GM12878 (cell line): ENCODE measurements at regions of chr4 and their contacts with region 1.

Region 1: DNA sequence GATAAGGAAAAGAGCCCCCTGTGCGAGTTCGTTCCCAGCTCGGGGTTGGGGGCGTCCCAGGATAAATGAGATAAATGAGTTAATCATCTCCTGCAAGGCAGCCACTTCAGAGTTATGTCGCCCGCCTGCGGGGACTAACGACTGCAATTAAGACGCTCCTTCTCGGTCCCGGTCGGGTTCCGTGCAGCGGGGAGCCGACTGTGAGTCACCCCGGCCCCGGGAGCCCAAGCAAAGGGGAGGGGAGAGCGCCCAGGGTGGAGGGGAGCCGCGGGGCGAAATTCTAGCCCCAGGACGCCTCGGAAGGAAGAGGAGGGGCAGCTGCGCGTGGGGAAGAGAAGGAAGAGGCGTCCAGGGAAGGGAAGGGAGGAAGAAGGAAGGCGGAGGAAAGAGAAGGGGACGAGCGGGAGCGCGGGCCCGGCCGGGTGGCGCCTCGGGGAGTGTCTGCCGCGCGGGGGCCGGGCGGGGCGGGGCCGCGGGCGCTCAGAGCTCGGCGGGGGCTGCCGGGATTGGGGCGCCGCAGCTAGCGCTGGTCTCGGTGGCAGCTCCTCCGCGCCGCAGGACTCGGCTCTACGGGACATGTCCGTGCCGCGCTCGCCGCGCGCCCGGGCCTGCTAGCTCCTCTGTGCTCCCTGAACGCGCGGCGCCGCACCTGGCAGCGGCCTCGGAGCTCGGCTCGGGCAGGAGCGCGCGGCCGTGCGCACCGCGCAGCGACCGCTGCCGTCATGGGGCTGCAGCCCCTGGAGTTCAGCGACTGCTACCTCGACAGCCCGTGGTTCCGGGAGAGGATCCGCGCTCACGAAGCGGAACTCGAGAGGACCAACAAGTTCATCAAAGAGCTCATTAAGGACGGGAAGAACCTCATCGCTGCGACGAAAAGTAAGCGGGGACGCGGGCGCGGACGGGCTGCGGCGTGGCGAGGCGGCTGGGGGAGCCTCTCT is at the start of gene ARHGAP10:
- DNase-seq: no peak
- ATAC-seq: peak; percentile 71
- H3K4me3 ChIP-seq: peak within 1 kb of the TSS; percentile 98
- H3K27ac ChIP-seq: peak within 1 kb of the TSS; percentile 91
- H3K4me1 ChIP-seq: peaks cover 12% of the 10 kb centered on the region
- H3K27me3 ChIP-seq: no peaks in the 10 kb centered on the region
- CTCF ChIP-seq: no peak
- EP300 ChIP-seq: no peak
- POLR2A ChIP-seq: peak; percentile 78
- RAD21 ChIP-seq: no peak
- polyA plus RNA-seq, gene ARHGAP10: 1.3 to 4.5 TPM

Region 2: DNA sequence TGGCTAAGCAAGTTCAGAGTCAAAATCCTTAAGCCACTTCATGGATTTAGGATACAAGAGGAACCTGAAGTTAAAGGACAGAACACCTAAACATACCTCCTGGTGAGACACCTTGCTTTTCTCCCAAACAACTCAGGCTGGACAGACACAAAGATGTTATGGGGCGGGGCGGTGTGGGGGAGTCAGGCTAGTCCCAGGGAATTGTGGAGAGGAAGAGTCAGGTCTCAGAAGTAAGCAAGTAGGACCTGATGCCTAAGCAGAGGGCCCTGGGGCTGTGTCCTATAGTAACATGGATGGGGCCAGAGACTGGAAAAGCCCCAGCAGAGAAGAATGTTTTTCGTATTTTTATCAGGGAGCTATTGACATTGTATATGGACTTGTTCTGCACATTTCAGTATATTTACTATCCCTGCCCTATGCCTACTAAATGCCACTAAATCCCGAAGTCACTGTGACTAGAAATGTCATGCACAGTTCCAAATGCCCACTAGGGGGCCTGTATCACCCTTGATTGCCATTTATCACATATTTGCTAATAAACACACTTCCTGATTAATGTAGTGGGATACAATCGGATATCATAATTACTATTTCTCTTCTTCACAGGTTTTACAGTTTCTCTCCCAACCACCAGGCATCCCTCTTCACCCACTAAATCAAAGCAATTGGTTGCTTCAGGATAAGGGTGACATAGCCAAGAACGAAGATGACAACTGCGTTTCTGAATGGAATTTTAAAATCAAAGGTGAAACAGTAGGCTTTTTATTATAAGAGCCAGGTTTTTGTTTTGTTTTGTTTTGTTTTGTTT is 23.8 kb before region 1 on chr4:
- CTCF ChIA-PET with region 1: interaction called, 8 read pairs
- POLR2A ChIA-PET with region 1: interaction called, 6 read pairs
- RAD21 ChIA-PET with region 1: interaction called, 9 read pairs
- SMC1A ChIA-PET with region 1: interaction called, 19 read pairs
- in situ Hi-C with region 1: no loop called
- intact Hi-C with region 1: loop called (anchors 2 kb)
- DNase-seq: no peak
- ATAC-seq: peak; percentile 82
- H3K4me3 ChIP-seq: no peak overlapping the region
- H3K27ac ChIP-seq: no peak overlapping the region
- H3K4me1 ChIP-seq: peaks cover 3% of the 10 kb centered on the region
- H3K27me3 ChIP-seq: no peaks in the 10 kb centered on the region
- CTCF ChIP-seq: peak; percentile 76 to 92 (median 87)
- EP300 ChIP-seq: no peak
- POLR2A ChIP-seq: no peak
- RAD21 ChIP-seq: peak; percentile 95

Region 3: GRCh38 chr4:147749811-147750321 is 18.0 kb after region 1 on chr4:
- CTCF ChIA-PET with region 1: interaction called, 4 read pairs
- POLR2A ChIA-PET with region 1: interaction called, 6 read pairs
- RAD21 ChIA-PET with region 1: interaction called, 12 read pairs
- SMC1A ChIA-PET with region 1: interaction called, 7 read pairs
- in situ Hi-C with region 1: no loop called
- intact Hi-C with region 1: no loop called
- DNase-seq: peak; percentile 73
- ATAC-seq: peak; percentile 97
- H3K4me3 ChIP-seq: peak overlapping the region; percentile 39; the same call in 1 of the 2 replicates
- H3K27ac ChIP-seq: peak overlapping the region; percentile 52
- H3K4me1 ChIP-seq: peaks cover 17% of the 10 kb centered on the region
- H3K27me3 ChIP-seq: no peaks in the 10 kb centered on the region
- CTCF ChIP-seq: no peak
- EP300 ChIP-seq: peak; percentile 29 to 73; a peak in 2 of 4 replicates
- POLR2A ChIP-seq: no peak
- RAD21 ChIP-seq: no peak

Region 4: GRCh38 chr4:147760695-147761094 is 28.8 kb after region 1 on chr4:
- CTCF ChIA-PET with region 1: no interaction called
- POLR2A ChIA-PET with region 1: no interaction called
- RAD21 ChIA-PET with region 1: no interaction called
- SMC1A ChIA-PET with region 1: no interaction called
- in situ Hi-C with region 1: no loop called
- intact Hi-C with region 1: no loop called
- DNase-seq: no peak
- ATAC-seq: peak; percentile 58
- H3K4me3 ChIP-seq: no peak overlapping the region
- H3K27ac ChIP-seq: no peak overlapping the region; the same call in 1 of the 2 replicates
- H3K4me1 ChIP-seq: peaks cover 17% of the 10 kb centered on the region
- H3K27me3 ChIP-seq: no peaks in the 10 kb centered on the region
- CTCF ChIP-seq: no peak
- EP300 ChIP-seq: no peak
- POLR2A ChIP-seq: no peak
- RAD21 ChIP-seq: no peak

Region 5: GRCh38 chr4:147786031-147786430 is 54.2 kb after region 1 on chr4:
- CTCF ChIA-PET with region 1: no interaction called
- POLR2A ChIA-PET with region 1: interaction called, 8 read pairs
- RAD21 ChIA-PET with region 1: interaction called, 50 read pairs
- SMC1A ChIA-PET with region 1: interaction called, 11 read pairs
- in situ Hi-C with region 1: no loop called
- intact Hi-C with region 1: no loop called
- DNase-seq: no peak
- ATAC-seq: peak; percentile 93
- H3K4me3 ChIP-seq: 0 out of 2 replicates have a peak overlapping the region, but pooled peaks have one; percentile 22
- H3K27ac ChIP-seq: peak overlapping the region; percentile 87
- H3K4me1 ChIP-seq: peaks cover 48% of the 10 kb centered on the region
- H3K27me3 ChIP-seq: no peaks in the 10 kb centered on the region
- CTCF ChIP-seq: no peak
- EP300 ChIP-seq: peak in 1 of 2 experiments; percentile 74; a peak in 1 of 4 replicates
- POLR2A ChIP-seq: no peak
- RAD21 ChIP-seq: no peak

Region 6: GRCh38 chr4:147843162-147843561 is 111.3 kb after region 1 on chr4:
- CTCF ChIA-PET with region 1: interaction called, 5 read pairs
- POLR2A ChIA-PET with region 1: interaction called, 5 read pairs
- RAD21 ChIA-PET with region 1: interaction called, 14 read pairs
- SMC1A ChIA-PET with region 1: interaction called, 8 read pairs
- in situ Hi-C with region 1: no loop called
- intact Hi-C with region 1: loop called (anchors 5 kb)
- DNase-seq: no peak
- ATAC-seq: peak; percentile 71
- H3K4me3 ChIP-seq: no peak overlapping the region
- H3K27ac ChIP-seq: no peak overlapping the region
- H3K4me1 ChIP-seq: peaks cover 28% of the 10 kb centered on the region
- H3K27me3 ChIP-seq: no peaks in the 10 kb centered on the region
- CTCF ChIP-seq: peak; percentile 35 to 50 (median 37); a peak in 5 of 6 replicates
- EP300 ChIP-seq: no peak
- POLR2A ChIP-seq: no peak
- RAD21 ChIP-seq: peak; percentile 30; the same call in 1 of the 2 replicates